Transverse colon (tissue), 4 donors: ENCODE measurements at regions of chr5 and their contacts with region 1.

Region 1: DNA sequence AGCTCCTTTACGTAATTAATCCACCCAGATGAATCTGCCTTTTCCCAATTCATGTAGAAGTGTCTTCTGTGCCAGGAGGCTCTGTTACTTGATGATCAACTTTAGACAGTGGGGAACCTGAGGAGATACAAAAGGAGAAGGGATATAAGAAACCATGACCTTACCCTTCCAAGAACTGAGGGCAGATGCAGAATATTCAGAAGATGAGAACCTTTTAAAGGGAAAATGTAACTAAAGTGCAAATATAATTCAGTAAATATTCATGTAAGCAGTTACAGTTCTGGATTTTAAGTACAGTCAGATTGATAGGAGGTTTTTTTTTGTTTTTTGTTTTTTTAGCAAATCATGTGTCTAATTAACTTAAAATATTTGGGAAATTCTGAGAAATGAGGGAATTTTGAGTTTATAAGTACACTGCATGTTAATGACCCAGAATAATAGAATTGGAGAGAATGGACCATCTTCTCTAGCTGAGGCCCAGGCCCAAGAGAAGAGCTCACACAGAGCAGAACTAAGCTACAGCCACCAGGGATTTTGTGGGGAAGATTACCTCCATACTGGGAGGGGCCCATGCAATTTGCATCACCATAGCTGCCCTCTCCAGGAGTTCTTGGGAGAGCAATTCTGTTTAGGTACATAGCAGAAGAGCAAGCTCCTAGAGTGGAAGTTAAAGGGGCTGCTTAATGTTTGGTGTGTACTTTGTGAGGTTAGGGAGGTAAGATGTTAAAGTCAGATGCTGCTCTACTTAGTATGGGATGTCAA is 61.5 kb downstream of the SV2C start:
- DNase-seq: no peak
- H3K4me3 ChIP-seq: no peak overlapping the region
- H3K27ac ChIP-seq: no peak overlapping the region
- H3K4me1 ChIP-seq: no peaks in the 10 kb centered on the region
- H3K27me3 ChIP-seq: no peaks in the 10 kb centered on the region
- CTCF ChIP-seq: no peak
- EP300 ChIP-seq: no peak
- POLR2A ChIP-seq: no peak

Region 2: GRCh38 chr5:76029739-76030138 is 115.0 kb before region 1 on chr5:
- in situ Hi-C with region 1: no loop called
- intact Hi-C with region 1: no loop called
- DNase-seq: no peak
- H3K4me3 ChIP-seq: no peak overlapping the region
- H3K27ac ChIP-seq: no peak overlapping the region
- H3K4me1 ChIP-seq: no peaks in the 10 kb centered on the region
- H3K27me3 ChIP-seq: no peaks in the 10 kb centered on the region
- CTCF ChIP-seq: no peak
- EP300 ChIP-seq: no peak
- POLR2A ChIP-seq: no peak

Region 3: DNA sequence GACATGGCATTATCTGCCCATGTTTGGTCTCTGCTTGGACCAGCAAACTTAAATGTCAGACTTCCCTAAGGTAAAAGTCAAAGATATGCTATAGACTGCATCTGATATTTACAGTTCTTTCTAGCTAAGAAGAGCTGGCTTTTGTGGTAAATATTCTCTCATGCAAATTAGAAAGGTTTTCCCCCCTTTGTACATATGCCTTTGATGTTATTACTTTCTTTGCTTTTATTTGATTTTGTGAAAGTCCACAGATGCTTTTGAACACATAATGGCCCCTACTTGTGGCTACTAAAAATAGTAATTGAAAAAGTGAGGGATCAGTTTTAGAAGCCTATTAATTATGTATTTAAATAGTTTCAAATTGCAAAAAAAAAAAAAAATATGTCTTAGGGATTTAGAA is 42.7 kb after region 1 on chr5:
- in situ Hi-C with region 1: no loop called
- intact Hi-C with region 1: loop called (anchors 5 kb)
- DNase-seq: no peak
- H3K4me3 ChIP-seq: no peak overlapping the region
- H3K27ac ChIP-seq: no peak overlapping the region
- H3K4me1 ChIP-seq: no peaks in the 10 kb centered on the region
- H3K27me3 ChIP-seq: no peaks in the 10 kb centered on the region
- CTCF ChIP-seq: no peak
- EP300 ChIP-seq: no peak
- POLR2A ChIP-seq: no peak